Mammary epithelial cell (primary cell): ENCODE measurements at regions of chr11 and their contacts with region 1.

Region 1: GRCh38 chr11:35617687-35618496 is at the start of gene FJX1:
- DNase-seq: peak; percentile 90
- H3K4me3 ChIP-seq: peak within 1 kb of the TSS; percentile 73 to 91 (median 81)
- H3K27ac ChIP-seq: peak within 1 kb of the TSS; percentile 80
- H3K4me1 ChIP-seq: peaks cover 54% of the 10 kb centered on the region
- H3K27me3 ChIP-seq: no peaks in the 10 kb centered on the region
- CTCF ChIP-seq: no peak
- total RNA-seq, gene FJX1: 38.5 to 53.8 TPM

Region 2: DNA sequence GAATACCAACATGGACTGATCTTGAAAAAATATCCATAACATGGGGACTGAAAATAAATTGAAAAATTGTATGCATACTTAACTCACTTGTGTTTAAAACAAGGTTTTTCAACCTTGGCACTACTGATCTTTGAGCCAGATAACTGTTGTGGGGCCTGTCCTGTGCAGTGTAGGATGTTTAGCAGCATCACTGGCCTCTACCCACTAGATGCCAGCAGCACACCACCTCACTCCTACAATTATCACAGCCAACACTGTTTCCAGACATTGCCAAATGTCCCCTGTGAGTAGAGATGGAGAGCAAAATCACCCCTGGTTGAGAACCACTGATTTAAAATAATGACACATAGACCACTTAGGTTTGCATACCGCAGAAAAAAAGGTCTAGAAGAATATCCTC is 153.6 kb before region 1 on chr11:
- CTCF ChIA-PET with region 1: no interaction called
- dilution Hi-C with region 1: no loop called
- in situ Hi-C with region 1: no loop called
- intact Hi-C with region 1: loop called (anchors 1 kb)
- DNase-seq: peak; percentile 12
- H3K4me3 ChIP-seq: no peak overlapping the region
- H3K27ac ChIP-seq: no peak overlapping the region
- H3K4me1 ChIP-seq: no peaks in the 10 kb centered on the region
- H3K27me3 ChIP-seq: no peaks in the 10 kb centered on the region
- CTCF ChIP-seq: peak in 1 of 2 donors; percentile 47

Region 3: GRCh38 chr11:35579557-35580396 is 38.1 kb before region 1 on chr11:
- CTCF ChIA-PET with region 1: no interaction called
- dilution Hi-C with region 1: no loop called
- in situ Hi-C with region 1: no loop called
- intact Hi-C with region 1: no loop called
- DNase-seq: peak; percentile 76
- H3K4me3 ChIP-seq: no peak overlapping the region
- H3K27ac ChIP-seq: peak overlapping the region; percentile 43
- H3K4me1 ChIP-seq: peaks cover 31% of the 10 kb centered on the region
- H3K27me3 ChIP-seq: no peaks in the 10 kb centered on the region
- CTCF ChIP-seq: no peak

Region 4: GRCh38 chr11:35650006-35650405 is 32.1 kb after region 1 on chr11:
- CTCF ChIA-PET with region 1: no interaction called
- dilution Hi-C with region 1: no loop called
- in situ Hi-C with region 1: no loop called
- intact Hi-C with region 1: no loop called
- DNase-seq: peak; percentile 66
- H3K4me3 ChIP-seq: no peak overlapping the region
- H3K27ac ChIP-seq: no peak overlapping the region
- H3K4me1 ChIP-seq: peaks cover 2% of the 10 kb centered on the region
- H3K27me3 ChIP-seq: no peaks in the 10 kb centered on the region
- CTCF ChIP-seq: no peak

Region 5: GRCh38 chr11:35662649-35663407 is 44.9 kb after region 1 on chr11 and contains the start of gene TRIM44:
- CTCF ChIA-PET with region 1: no interaction called
- dilution Hi-C with region 1: no loop called
- in situ Hi-C with region 1: loop called in 1 of 2 experiments (anchors 5 kb)
- intact Hi-C with region 1: loop called (anchors 1 kb)
- DNase-seq: peak; percentile 80
- H3K4me3 ChIP-seq: peak within 1 kb of the TSS; percentile 65 to 81 (median 76)
- H3K27ac ChIP-seq: peak within 1 kb of the TSS; percentile 88
- H3K4me1 ChIP-seq: peaks cover 13% of the 10 kb centered on the region
- H3K27me3 ChIP-seq: no peaks in the 10 kb centered on the region
- CTCF ChIP-seq: no peak
- total RNA-seq, gene TRIM44: 27.7 to 55.7 TPM

Region 6: DNA sequence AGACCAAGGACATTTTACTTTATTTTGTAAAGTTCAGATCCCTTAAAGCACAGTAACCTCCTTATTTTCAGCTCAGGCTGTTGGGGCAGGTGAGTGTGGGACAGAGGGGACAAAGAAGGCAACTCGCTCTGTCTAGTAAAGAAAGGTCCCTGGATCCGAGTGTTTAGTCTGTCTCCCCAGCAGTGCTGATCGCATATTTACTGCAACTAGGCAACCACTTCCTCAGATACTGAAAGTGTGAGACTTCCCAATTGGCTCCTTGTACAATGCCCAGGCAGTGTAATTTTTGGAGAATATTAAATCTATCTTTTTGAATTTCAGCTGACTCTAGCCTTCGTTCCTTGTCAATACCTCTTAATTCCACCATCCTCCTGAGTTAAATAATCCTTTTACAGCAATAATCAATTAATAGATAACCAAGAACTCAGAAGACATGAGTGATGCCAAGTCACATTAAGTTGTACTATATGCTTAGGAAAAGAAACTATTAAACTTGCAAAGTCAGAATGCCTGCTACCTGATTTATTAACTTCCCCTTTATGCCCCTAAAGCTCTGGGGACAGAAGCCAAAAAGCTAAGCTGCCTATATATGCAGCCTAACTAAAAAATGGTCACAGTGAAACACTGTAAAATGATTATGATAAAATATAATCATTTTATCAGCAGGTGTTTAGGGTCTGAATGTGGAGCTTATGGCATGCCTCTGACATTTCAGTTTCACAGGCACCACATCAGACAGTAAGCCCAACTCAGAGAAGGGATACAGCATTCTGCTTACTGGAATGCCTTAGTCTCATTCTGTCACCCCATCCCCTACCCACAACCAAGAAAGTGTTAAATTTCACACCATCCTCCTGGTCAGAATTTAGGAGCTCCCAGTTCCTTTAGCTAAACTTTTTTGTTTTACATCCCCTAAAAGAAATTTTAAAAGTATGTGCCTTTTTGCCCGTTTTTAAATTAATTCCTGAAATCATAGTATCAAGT is 183.4 kb after region 1 on chr11:
- CTCF ChIA-PET with region 1: no interaction called
- dilution Hi-C with region 1: loop called (anchors 5 kb)
- in situ Hi-C with region 1: loop called in 1 of 2 experiments (anchors 25 kb)
- intact Hi-C with region 1: loop called (anchors 2 kb)
- DNase-seq: no peak
- H3K4me3 ChIP-seq: no peak overlapping the region
- H3K27ac ChIP-seq: no peak overlapping the region
- H3K4me1 ChIP-seq: peaks cover 59% of the 10 kb centered on the region
- H3K27me3 ChIP-seq: no peaks in the 10 kb centered on the region
- CTCF ChIP-seq: no peak

Region 7: GRCh38 chr11:35893796-35894475 is 276.0 kb after region 1 on chr11:
- CTCF ChIA-PET with region 1: no interaction called
- dilution Hi-C with region 1: no loop called
- in situ Hi-C with region 1: no loop called
- intact Hi-C with region 1: loop called (anchors 2 kb)
- DNase-seq: peak; percentile 98
- H3K4me3 ChIP-seq: no peak overlapping the region
- H3K27ac ChIP-seq: no peak overlapping the region
- H3K4me1 ChIP-seq: peaks cover 17% of the 10 kb centered on the region
- H3K27me3 ChIP-seq: no peaks in the 10 kb centered on the region
- CTCF ChIP-seq: no peak

Region 8: DNA sequence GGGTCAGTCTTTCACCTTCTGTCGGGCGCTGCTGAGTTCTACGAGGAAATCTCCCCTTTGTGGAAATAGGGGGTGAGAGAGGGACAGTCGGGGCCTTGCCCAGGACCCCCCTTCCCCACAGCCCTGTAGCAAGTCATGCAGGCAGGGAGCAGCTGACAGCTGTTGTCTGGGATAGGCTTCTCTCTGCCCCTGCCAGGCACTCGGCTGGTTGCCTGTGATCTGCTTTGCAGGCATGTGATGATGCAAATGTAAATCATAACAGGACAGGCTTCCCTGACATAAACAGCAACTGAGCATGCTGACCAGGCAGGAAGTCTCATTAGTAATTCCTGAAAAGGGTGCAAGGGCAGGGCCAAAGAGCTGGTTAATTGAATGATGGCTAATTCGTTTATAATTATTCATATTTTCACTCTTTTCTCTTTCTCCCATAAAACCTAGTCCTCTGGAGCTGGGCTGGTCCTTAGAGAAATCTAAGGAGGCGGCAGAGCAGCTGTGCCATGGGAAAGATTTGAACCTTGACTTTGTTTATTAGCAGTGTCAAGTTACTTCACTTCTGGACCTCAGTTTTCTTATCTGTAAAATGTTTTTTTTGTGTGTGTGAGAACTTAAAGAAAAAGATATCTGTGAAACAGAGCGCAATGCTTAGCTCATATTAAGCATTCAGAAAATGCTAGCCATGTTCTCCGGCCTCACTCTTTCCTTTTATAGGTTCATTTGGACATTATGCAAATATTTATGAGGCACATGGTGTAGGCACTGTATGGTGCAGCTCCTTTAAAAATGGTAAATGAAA is 455.7 kb after region 1 on chr11:
- CTCF ChIA-PET with region 1: no interaction called
- dilution Hi-C with region 1: no loop called
- in situ Hi-C with region 1: loop called in 1 of 2 experiments (anchors 25 kb)
- intact Hi-C with region 1: loop called (anchors 1 kb)
- DNase-seq: peak; percentile 30
- H3K4me3 ChIP-seq: no peak overlapping the region
- H3K27ac ChIP-seq: no peak overlapping the region
- H3K4me1 ChIP-seq: peaks cover 18% of the 10 kb centered on the region
- H3K27me3 ChIP-seq: no peaks in the 10 kb centered on the region
- CTCF ChIP-seq: no peak

Region 9: GRCh38 chr11:36265793-36266628 is 648.1 kb after region 1 on chr11:
- CTCF ChIA-PET with region 1: no interaction called
- dilution Hi-C with region 1: no loop called
- in situ Hi-C with region 1: loop called in 1 of 2 experiments (anchors 10 kb)
- intact Hi-C with region 1: loop called (anchors 1 kb)
- DNase-seq: peak; percentile 29
- H3K4me3 ChIP-seq: no peak overlapping the region
- H3K27ac ChIP-seq: no peak overlapping the region
- H3K4me1 ChIP-seq: no peaks in the 10 kb centered on the region
- H3K27me3 ChIP-seq: no peaks in the 10 kb centered on the region
- CTCF ChIP-seq: peak; percentile 85 to 91